ENCODE measurements at regions of chr20 and their contacts with region 1.

Region 1: DNA sequence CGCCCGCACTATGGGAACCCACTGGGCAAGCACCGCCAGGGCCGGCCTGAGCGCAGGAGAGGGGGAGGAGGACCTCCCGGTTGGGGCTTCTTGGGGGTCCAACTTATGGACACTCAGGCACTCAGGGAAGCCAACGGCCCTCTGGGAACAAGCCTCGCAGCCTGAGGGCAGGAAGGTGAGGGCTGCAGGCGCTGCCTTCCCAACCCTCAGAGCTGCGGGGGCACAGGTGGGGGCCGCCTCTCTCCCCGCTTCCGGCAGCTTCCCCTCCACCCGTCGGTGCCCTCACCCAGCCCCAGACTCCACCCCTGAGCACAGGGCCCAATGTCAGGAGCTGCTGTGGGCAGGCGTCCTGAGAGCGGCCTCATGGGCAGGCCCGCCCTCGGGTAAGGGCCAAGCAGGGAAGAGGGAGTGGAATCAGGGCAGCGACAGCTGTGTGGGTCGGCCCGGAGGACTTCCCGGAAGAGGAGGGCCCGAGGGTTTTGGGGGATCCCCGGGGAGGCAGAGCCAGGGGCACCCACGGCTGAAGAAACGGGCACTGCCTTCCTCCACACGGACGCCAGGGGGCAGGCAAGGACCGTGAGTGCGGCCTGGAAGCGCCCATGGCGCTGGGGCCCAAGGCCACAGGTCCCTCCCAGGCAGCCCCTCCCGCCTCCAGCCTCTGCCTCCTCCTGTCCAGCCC is 488 bp upstream of the PTK6 start:
- DNase-seq: peak; percentile 93
- ATAC-seq: peak; percentile 86
- H3K4me3 Mint-ChIP-seq: peak overlapping the region; percentile 80
- H3K27ac Mint-ChIP-seq: peak overlapping the region; percentile 80
- H3K4me1 Mint-ChIP-seq: peaks cover 27% of the 10 kb centered on the region
- H3K27me3 Mint-ChIP-seq: no peaks in the 10 kb centered on the region
- CTCF ChIP-seq: peak; percentile 23

Region 2: DNA sequence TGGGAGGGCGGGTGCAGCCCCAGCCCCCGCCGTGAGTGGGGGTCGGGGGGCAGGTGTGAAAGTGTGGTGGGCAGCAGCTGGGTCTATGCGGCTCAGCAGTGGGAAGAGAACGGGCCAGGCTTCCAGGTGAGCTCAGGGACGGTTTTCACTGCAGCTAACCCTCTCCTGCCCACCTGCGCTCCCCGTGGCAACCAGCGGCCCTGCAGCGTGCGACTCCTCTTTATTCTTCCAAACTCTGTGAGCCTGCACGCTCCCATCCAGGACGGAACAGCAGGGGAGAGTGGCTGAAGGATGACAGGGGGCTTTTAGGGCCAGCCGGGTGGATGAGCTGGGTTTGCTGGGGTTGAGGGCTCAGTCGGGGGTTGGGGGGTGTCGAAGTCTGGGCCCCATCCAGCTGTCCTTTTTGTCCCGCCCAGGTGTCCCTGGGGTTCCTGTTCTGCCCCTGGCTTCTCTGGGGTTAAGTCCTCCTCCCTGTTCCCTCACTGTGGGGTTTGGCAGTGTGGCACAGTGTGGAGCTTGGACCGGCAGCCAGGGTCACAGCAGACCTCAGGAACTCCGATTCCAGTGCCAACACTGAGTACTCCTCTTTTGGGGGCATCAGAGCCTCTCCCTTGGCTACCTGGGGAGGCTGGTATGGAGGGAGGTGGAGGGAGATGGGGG is 302.8 kb before region 1 on chr20:
- CTCF ChIA-PET with region 1: no interaction called
- POLR2A ChIA-PET with region 1: no interaction called
- intact Hi-C with region 1: no loop called
- DNase-seq: no peak
- ATAC-seq: no peak
- H3K4me3 Mint-ChIP-seq: no peak overlapping the region
- H3K27ac Mint-ChIP-seq: no peak overlapping the region
- H3K4me1 Mint-ChIP-seq: peaks cover 8% of the 10 kb centered on the region
- H3K27me3 Mint-ChIP-seq: peaks cover 23% of the 10 kb centered on the region
- CTCF ChIP-seq: no peak

Region 3: DNA sequence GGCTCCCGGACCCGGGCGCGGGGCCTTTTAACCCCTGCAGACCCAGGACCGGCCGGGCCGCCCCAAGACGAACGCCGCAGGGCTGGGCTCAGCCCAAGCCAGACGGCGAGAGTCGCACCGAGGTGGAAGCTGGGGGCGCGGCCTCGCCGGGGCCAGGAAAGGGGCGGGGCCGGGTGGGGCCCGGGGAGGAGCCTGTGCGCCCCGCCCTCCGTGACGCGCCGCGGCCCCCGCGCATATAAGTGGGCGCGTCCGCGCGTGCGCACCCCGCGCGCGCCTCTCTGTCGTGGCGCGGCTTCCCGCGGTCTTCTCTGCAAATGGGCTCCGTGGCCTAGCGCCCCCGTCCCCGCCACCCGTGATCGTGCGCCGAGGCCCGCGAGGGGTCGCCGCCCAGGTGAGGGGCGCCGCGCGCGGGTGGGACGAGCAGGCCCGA is 17.1 kb before region 1 on chr20 and contains the start of gene PPDPF:
- CTCF ChIA-PET with region 1: interaction called, 4 read pairs
- POLR2A ChIA-PET with region 1: interaction called, 179 read pairs
- intact Hi-C with region 1: loop called (anchors 1 kb)
- DNase-seq: peak; percentile 84
- ATAC-seq: peak; percentile 81
- H3K4me3 Mint-ChIP-seq: peak within 1 kb of the TSS; percentile 81
- H3K27ac Mint-ChIP-seq: peak within 1 kb of the TSS; percentile 61
- H3K4me1 Mint-ChIP-seq: peaks cover 33% of the 10 kb centered on the region
- H3K27me3 Mint-ChIP-seq: no peaks in the 10 kb centered on the region
- CTCF ChIP-seq: no peak
- total RNA-seq, gene PPDPF: 170 and 172 TPM in 2 replicates

Region 4: GRCh38 chr20:63580796-63581461 is 43.3 kb after region 1 on chr20:
- CTCF ChIA-PET with region 1: interaction called, 12 read pairs
- POLR2A ChIA-PET with region 1: no interaction called
- intact Hi-C with region 1: loop called (anchors 1 kb)
- DNase-seq: no peak
- ATAC-seq: peak; percentile 98
- H3K4me3 Mint-ChIP-seq: no peak overlapping the region
- H3K27ac Mint-ChIP-seq: no peak overlapping the region
- H3K4me1 Mint-ChIP-seq: peaks cover 5% of the 10 kb centered on the region
- H3K27me3 Mint-ChIP-seq: peaks cover 2% of the 10 kb centered on the region
- CTCF ChIP-seq: no peak

Region 5: DNA sequence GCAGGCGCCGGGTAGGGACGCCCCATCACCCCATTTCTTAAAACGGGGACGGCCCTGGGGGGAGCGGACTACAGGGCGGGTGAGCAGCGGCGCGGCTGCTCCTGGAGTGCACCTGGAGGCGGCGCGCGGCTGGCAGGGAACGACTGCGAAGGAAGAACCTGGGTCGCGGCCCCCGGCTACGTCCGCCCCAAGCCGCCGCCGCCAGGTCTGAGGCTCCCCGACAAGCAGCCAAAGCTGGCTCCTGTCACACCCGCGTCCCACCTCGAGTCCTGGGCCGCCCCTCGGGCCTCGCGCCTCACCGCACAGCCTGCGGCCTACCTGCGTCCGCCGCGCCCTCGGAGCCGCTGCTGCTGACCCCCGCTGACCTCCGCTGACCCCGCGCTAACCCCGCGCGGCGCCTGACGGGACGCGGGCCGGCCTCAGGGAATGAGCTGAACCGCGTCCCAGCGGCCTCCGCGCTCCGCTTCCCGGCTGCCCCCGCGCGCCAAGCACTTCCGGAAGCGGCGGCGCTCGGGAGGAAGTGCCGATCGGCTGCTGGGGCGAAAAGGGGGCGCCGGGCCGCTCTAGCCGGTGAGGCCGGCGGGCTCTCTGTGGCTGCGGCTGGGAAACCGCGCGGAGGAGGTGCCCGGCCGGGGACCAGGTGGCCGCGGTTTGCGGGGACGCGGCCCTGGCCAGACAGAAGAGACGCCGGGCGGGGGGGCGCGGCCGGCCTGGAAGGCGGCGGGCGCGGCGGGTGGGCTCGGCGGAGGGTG is 170.1 kb after region 1 on chr20 and contains the starts of genes ARFRP1 and ZGPAT:
- CTCF ChIA-PET with region 1: interaction called, 3 read pairs
- POLR2A ChIA-PET with region 1: interaction called, 10 read pairs
- intact Hi-C with region 1: loop called (anchors 1 kb)
- DNase-seq: peak; percentile 91
- ATAC-seq: peak; percentile 94
- H3K4me3 Mint-ChIP-seq: peak within 1 kb of the TSS; percentile 87
- H3K27ac Mint-ChIP-seq: peak within 1 kb of the TSS; percentile 72
- H3K4me1 Mint-ChIP-seq: peaks cover 42% of the 10 kb centered on the region
- H3K27me3 Mint-ChIP-seq: no peaks in the 10 kb centered on the region
- CTCF ChIP-seq: no peak
- total RNA-seq, gene ARFRP1: 63.5 and 66.0 TPM in 2 replicates
- total RNA-seq, gene ZGPAT: 40.7 and 44.0 TPM in 2 replicates

Region 6: DNA sequence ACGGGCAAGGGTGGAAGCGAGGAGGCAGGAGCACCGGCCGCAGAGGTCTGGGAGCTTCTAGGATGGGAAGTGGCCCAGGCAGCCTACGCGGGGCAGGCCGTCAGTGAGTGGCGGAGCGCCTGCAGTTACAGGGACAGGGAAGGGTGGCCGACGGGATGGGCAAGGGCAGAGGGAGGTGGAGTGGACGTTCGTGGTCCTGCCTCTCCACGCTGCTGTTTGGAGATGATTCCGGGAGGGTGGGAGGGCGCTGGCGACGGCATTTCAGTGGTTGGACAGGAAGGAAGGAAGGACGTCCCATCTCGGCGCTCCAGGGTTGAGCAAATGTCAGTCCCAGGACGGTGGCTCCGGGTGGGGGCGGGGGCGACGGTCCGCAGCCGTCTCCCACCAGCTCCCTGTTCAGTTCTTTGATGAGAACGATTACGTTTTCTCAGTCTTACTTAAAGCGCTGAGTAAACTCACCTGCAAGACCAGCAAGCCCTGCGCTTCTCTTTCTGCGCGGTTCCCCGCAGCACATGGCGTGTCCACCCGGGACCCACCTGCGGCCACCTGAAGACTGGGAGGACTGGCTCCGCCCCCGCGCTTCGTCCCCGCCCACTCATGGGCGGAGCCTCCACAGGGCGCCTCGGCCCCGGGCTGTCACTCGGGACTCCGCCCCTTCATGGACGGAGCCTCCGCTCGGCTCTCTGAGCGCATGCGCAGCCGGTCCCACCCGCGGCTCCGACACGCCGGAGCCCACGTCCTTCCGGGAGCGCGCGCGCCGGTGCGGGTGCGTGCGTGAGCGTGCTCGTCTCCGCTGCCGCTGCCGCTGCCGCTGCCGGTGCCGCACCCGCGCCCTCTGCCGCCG is 356.9 kb after region 1 on chr20 and contains the start of gene DNAJC5:
- CTCF ChIA-PET with region 1: interaction called, 3 read pairs
- POLR2A ChIA-PET with region 1: no interaction called
- intact Hi-C with region 1: loop called (anchors 1 kb)
- DNase-seq: peak; percentile 97
- ATAC-seq: peak; percentile 92
- H3K4me3 Mint-ChIP-seq: peak within 1 kb of the TSS; percentile 88
- H3K27ac Mint-ChIP-seq: peak within 1 kb of the TSS; percentile 90
- H3K4me1 Mint-ChIP-seq: peaks cover 45% of the 10 kb centered on the region
- H3K27me3 Mint-ChIP-seq: no peaks in the 10 kb centered on the region
- CTCF ChIP-seq: no peak
- total RNA-seq, gene DNAJC5: 27.5 and 28.6 TPM in 2 replicates

Region 7: GRCh38 chr20:64038565-64039292 is 501.1 kb after region 1 on chr20:
- CTCF ChIA-PET with region 1: interaction called, 11 read pairs
- POLR2A ChIA-PET with region 1: no interaction called
- intact Hi-C with region 1: loop called (anchors 5 kb)
- DNase-seq: peak; percentile 81
- ATAC-seq: peak; percentile 89
- H3K4me3 Mint-ChIP-seq: peak overlapping the region; percentile 73
- H3K27ac Mint-ChIP-seq: no peak overlapping the region
- H3K4me1 Mint-ChIP-seq: peaks cover 17% of the 10 kb centered on the region
- H3K27me3 Mint-ChIP-seq: peaks cover 9% of the 10 kb centered on the region
- CTCF ChIP-seq: peak; percentile 17